OCI-LY7 (cell line): ENCODE measurements at regions of chr3 and their contacts with region 1.

Region 1: DNA sequence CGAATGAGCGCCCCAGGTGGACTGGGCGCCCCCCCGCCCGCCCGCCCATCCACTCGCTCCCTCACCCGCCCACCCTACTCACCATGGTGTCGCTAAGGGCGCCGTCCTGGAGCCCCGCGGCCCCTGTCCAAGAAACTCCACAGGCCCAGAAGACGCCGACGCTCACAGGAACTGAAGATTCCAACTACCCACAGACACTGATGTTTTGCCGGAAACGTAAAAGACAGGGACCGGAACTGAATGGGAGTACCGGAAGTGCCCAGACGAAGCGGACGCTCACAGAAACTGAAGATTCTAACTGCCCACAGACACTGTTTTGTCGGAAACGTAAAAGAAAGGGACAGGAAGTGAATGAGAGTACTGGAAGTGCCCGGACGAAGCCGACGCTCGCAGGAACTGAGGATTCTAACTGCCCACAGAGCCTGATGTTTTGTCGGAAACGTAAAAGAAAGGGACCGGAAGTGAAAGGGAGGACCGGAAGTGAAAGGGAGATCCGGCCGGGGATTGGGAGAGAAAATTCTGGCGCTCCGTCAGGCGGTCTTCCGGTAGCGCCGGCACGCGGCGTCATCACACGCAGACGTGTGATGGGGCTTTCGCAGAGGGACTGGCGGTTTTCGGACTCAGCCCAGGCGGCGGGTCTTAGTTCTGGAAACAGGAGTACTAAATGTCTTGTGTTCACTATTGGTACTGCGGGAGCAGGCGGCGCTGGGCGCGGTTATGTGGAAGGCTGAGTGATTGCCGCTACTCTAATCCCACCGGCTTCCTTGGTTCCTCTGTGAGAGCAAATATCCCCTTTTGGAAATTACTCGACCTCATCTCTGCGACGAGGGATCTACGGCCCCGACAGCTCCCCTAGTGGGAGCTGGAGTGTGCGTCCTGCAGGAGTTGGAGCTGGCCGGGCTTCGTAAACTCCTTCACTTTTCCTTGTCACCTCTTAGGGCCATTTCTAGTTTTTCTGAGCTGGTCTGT is at the start of gene ISY1:
- DNase-seq: peak; percentile 97
- H3K4me3 ChIP-seq: peak within 1 kb of the TSS; percentile 95
- H3K27ac ChIP-seq: peak within 1 kb of the TSS; percentile 91
- H3K4me1 ChIP-seq: peaks cover 28% of the 10 kb centered on the region
- CTCF ChIP-seq: peak; percentile 94
- total RNA-seq, gene ISY1: 34.5 and 40.3 TPM in 2 replicates

Region 2: GRCh38 chr3:127549820-127550460 is 1611.2 kb before region 1 on chr3:
- CTCF ChIA-PET with region 1: no interaction called
- POLR2A ChIA-PET with region 1: no interaction called
- intact Hi-C with region 1: loop called (anchors 5 kb)
- DNase-seq: no peak
- H3K4me3 ChIP-seq: no peak overlapping the region
- H3K27ac ChIP-seq: no peak overlapping the region
- H3K4me1 ChIP-seq: peaks cover 3% of the 10 kb centered on the region
- CTCF ChIP-seq: no peak

Region 3: GRCh38 chr3:129052675-129053074 is 108.5 kb before region 1 on chr3:
- CTCF ChIA-PET with region 1: interaction called, 6 read pairs
- POLR2A ChIA-PET with region 1: no interaction called
- intact Hi-C with region 1: loop called (anchors 1 kb)
- DNase-seq: no peak
- H3K4me3 ChIP-seq: no peak overlapping the region
- H3K27ac ChIP-seq: no peak overlapping the region
- H3K4me1 ChIP-seq: peaks cover 9% of the 10 kb centered on the region
- CTCF ChIP-seq: no peak

Region 4: GRCh38 chr3:129120254-129121004 is 40.7 kb before region 1 on chr3:
- CTCF ChIA-PET with region 1: no interaction called
- POLR2A ChIA-PET with region 1: no interaction called
- intact Hi-C with region 1: loop called (anchors 1 kb)
- DNase-seq: peak; percentile 97
- H3K4me3 ChIP-seq: peak overlapping the region; percentile 74
- H3K27ac ChIP-seq: peak overlapping the region; percentile 92
- H3K4me1 ChIP-seq: peaks cover 65% of the 10 kb centered on the region
- CTCF ChIP-seq: no peak

Region 5: DNA sequence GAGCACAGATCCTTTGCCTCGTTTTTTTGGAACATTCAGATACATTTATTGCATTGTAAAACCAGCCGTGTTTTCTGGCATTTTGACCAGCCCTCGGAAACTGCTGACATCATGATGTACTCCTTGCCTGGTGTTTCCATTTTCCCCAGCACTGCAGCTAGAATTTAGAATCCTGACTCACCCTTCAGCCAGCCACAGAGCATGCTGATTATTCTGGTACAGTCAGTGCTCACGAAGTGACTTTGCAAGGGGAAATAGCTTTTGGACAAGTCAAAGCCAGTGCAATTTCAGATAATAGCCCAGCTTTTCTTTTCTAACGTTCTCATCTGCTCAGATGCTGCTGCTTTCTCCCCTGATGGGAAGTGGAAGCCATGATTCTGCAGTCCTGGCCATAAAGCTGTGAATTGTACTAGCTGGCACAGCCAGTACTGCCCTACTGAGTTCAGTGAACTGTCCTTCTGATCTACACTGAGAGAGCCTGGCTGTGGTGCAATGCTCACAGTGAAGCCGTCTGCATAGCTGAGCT is 34.6 kb after region 1 on chr3:
- CTCF ChIA-PET with region 1: no interaction called
- POLR2A ChIA-PET with region 1: no interaction called
- intact Hi-C with region 1: no loop called
- DNase-seq: no peak
- H3K4me3 ChIP-seq: no peak overlapping the region
- H3K27ac ChIP-seq: no peak overlapping the region
- H3K4me1 ChIP-seq: peaks cover 18% of the 10 kb centered on the region
- CTCF ChIP-seq: no peak

Region 6: DNA sequence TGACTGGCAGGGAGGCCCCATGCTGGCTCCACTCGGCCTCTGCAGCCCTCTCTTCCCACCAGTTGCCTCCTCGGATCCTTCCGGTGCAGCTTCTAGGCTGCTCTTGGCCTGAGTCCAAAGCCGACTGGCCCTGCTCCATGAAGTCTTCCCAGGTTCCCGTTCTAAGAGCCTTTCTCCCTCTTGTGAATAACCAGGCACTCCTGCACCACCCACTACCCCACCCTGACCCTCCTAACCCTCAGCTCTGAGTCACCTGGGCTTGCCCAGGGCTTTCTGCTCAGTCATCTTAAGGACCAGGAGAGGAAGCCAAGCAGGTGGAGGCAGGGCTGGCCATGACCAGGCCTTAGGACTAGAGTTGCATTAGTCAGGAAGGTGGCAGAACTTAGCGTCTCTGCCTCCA is 50.6 kb after region 1 on chr3:
- CTCF ChIA-PET with region 1: no interaction called
- POLR2A ChIA-PET with region 1: no interaction called
- intact Hi-C with region 1: no loop called
- DNase-seq: no peak
- H3K4me3 ChIP-seq: no peak overlapping the region
- H3K27ac ChIP-seq: no peak overlapping the region
- H3K4me1 ChIP-seq: no peaks in the 10 kb centered on the region
- CTCF ChIP-seq: no peak

Region 7: GRCh38 chr3:129233538-129233937 is 72.4 kb after region 1 on chr3:
- CTCF ChIA-PET with region 1: interaction called, 3 read pairs
- POLR2A ChIA-PET with region 1: interaction called, 3 read pairs
- intact Hi-C with region 1: loop called (anchors 1 kb)
- DNase-seq: peak; percentile 98
- H3K4me3 ChIP-seq: peak overlapping the region; percentile 45
- H3K27ac ChIP-seq: peak overlapping the region; percentile 86
- H3K4me1 ChIP-seq: peaks cover 65% of the 10 kb centered on the region
- CTCF ChIP-seq: no peak